CD4-positive, alpha-beta memory T cell (primary cell): ENCODE measurements at regions of chr9 and their contacts with region 1.

Region 1: DNA sequence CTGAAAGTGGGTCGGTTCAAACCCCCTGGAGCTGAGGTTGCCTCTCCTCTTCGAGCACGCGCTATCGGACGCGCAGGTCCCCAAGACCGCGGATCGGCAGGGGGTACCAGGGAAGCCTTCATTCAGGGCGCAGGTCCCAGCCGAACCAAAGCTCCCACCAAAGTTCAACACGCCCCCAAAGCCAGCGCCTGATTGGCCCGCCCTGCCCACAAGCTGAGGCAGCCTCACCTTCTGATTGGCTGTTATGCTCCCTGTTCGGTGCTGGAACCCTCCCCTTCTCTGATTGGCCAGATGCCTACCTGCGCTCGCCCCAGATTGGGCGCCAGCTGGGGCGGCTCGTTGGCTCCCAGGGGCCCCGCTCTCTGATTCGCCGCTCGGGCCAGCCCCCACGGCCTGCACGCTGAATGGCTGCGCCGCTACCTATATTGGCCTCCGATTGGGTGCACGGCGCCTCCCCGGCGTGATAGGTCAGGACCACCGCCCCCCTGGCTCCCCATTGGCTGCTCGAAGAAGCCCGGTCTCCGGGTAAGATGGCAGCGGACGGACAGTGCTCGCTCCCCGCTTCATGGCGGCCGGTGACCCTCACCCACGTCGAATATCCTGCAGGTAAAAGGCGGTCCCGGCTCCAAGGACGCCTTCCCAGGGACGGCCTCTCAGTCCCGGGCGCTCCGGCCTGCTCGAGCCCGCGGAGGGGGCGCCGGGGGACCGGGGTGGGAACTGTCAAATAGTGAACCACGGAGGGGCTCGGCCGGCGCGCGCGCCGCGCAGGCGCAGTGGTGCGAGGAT is at the start of gene DOLPP1:
- DNase-seq: peak; percentile 99 to 100 (median 99)
- H3K4me3 ChIP-seq: peak within 1 kb of the TSS; percentile 75 to 88
- H3K4me3 Mint-ChIP-seq: peak within 1 kb of the TSS; percentile 89 to 96 (median 92)
- H3K27ac ChIP-seq: peak within 1 kb of the TSS; percentile 69
- H3K27ac Mint-ChIP-seq: peak within 1 kb of the TSS; percentile 82 to 97 (median 90)
- H3K4me1 ChIP-seq: peaks cover 23% of the 10 kb centered on the region
- H3K4me1 Mint-ChIP-seq: peaks cover 6 to 37% (median 24%) of the 10 kb centered on the region in 4 donors
- H3K27me3 ChIP-seq: no peaks in the 10 kb centered on the region
- H3K27me3 Mint-ChIP-seq: no peaks in the 10 kb centered on the region
- total RNA-seq, gene DOLPP1: 11.4 to 13.0 TPM

Region 2: GRCh38 chr9:128911529-128912035 is 169.2 kb before region 1 on chr9:
- CTCF ChIA-PET with region 1: no interaction called
- POLR2A ChIA-PET with region 1: no interaction called
- intact Hi-C with region 1: no loop called
- DNase-seq: no peak
- H3K4me3 ChIP-seq: no peak overlapping the region
- H3K4me3 Mint-ChIP-seq: no peak overlapping the region
- H3K27ac ChIP-seq: no peak overlapping the region
- H3K27ac Mint-ChIP-seq: peak overlapping the region in 5 of 7 donors; percentile 15 to 81 (median 64)
- H3K4me1 ChIP-seq: peaks cover 57% of the 10 kb centered on the region
- H3K4me1 Mint-ChIP-seq: peaks cover 19 to 71% (median 39%) of the 10 kb centered on the region in 4 donors
- H3K27me3 ChIP-seq: no peaks in the 10 kb centered on the region
- H3K27me3 Mint-ChIP-seq: no peaks in the 10 kb centered on the region

Region 3: GRCh38 chr9:128927731-128928411 is 152.9 kb before region 1 on chr9:
- CTCF ChIA-PET with region 1: no interaction called
- POLR2A ChIA-PET with region 1: no interaction called
- intact Hi-C with region 1: no loop called
- DNase-seq: peak in 4 of 5 donors; percentile 44 to 61 (median 49)
- H3K4me3 ChIP-seq: no peak overlapping the region
- H3K4me3 Mint-ChIP-seq: no peak overlapping the region
- H3K27ac ChIP-seq: no peak overlapping the region
- H3K27ac Mint-ChIP-seq: peak overlapping the region in 4 of 7 donors; percentile 5 to 60 (median 20)
- H3K4me1 ChIP-seq: peaks cover 8% of the 10 kb centered on the region
- H3K4me1 Mint-ChIP-seq: peaks cover 4 to 13% (median 11%) of the 10 kb centered on the region in 4 donors
- H3K27me3 ChIP-seq: no peaks in the 10 kb centered on the region
- H3K27me3 Mint-ChIP-seq: no peaks in the 10 kb centered on the region

Region 4: DNA sequence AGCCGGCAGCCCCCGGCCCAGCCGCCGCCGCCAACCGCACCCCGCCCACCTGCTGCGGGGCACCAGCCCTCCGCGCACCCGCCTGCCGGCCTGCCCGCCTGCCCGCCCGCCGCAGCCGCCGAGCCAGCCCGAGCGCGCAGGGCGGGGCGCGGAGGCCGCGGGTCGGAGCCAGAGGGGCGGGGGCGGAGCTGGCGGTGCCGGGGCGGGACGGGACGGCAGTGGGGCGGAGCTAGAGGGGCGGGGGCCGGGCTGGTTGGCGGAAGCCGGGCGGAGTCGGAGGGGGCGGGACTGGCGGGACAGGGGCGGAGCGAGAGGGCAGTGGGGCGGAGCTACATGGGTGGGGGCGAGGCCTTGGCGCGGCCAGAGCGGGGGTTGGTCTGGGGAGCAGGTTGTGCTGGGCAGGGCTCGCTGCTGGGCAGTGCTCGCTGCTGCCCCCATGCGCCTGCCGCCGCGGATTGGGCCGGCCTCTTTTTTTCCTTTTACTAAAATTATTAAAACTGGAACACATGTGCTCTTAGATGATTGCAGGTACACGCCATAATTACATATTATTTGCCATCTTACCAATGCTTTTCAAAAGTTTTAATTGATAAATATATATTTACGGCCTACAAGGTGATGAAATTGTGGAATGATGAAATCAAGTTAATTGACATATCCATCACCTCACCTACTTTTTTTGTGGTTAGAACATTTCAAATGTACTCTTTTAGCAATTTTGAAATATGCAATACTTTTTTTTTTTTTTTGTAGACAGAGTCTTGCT is 52.4 kb before region 1 on chr9 and contains the start of gene SH3GLB2:
- CTCF ChIA-PET with region 1: no interaction called
- POLR2A ChIA-PET with region 1: interaction called, 15 read pairs
- intact Hi-C with region 1: loop called (anchors 2 kb)
- DNase-seq: peak; percentile 84 to 93 (median 86)
- H3K4me3 ChIP-seq: peak within 1 kb of the TSS; percentile 37 to 52
- H3K4me3 Mint-ChIP-seq: peak within 1 kb of the TSS; percentile 79 to 92 (median 84)
- H3K27ac ChIP-seq: peak within 1 kb of the TSS; percentile 34
- H3K27ac Mint-ChIP-seq: peak within 1 kb of the TSS; percentile 78 to 90 (median 85)
- H3K4me1 ChIP-seq: peaks cover 20% of the 10 kb centered on the region
- H3K4me1 Mint-ChIP-seq: peaks cover 15 to 29% (median 20%) of the 10 kb centered on the region in 4 donors
- H3K27me3 ChIP-seq: no peaks in the 10 kb centered on the region
- H3K27me3 Mint-ChIP-seq: no peaks in the 10 kb centered on the region
- total RNA-seq, gene SH3GLB2: 111 to 113 TPM

Region 5: GRCh38 chr9:129036241-129036922 is 44.4 kb before region 1 on chr9 and contains the start of gene MIGA2:
- CTCF ChIA-PET with region 1: no interaction called
- POLR2A ChIA-PET with region 1: interaction called, 11 read pairs
- intact Hi-C with region 1: loop called (anchors 1 kb)
- DNase-seq: peak; percentile 92 to 95 (median 94)
- H3K4me3 ChIP-seq: peak within 1 kb of the TSS; percentile 71 to 93
- H3K4me3 Mint-ChIP-seq: peak within 1 kb of the TSS; percentile 90 to 99 (median 96)
- H3K27ac ChIP-seq: peak within 1 kb of the TSS; percentile 70
- H3K27ac Mint-ChIP-seq: peak within 1 kb of the TSS; percentile 84 to 96 (median 91)
- H3K4me1 ChIP-seq: peaks cover 24% of the 10 kb centered on the region
- H3K4me1 Mint-ChIP-seq: peaks cover 19 to 46% (median 30%) of the 10 kb centered on the region in 4 donors
- H3K27me3 ChIP-seq: no peaks in the 10 kb centered on the region
- H3K27me3 Mint-ChIP-seq: no peaks in the 10 kb centered on the region
- total RNA-seq, gene MIGA2: 80.5 to 84.2 TPM

Region 6: GRCh38 chr9:129068990-129069861 is 11.6 kb before region 1 on chr9:
- CTCF ChIA-PET with region 1: interaction called, 3 read pairs
- POLR2A ChIA-PET with region 1: interaction called, 19 read pairs
- intact Hi-C with region 1: no loop called
- DNase-seq: peak; percentile 51 to 67 (median 58)
- H3K4me3 ChIP-seq: no peak overlapping the region
- H3K4me3 Mint-ChIP-seq: peak overlapping the region in 7 of 8 donors; percentile 15 to 71 (median 54)
- H3K27ac ChIP-seq: peak overlapping the region; percentile 49
- H3K27ac Mint-ChIP-seq: peak overlapping the region; percentile 72 to 92 (median 83)
- H3K4me1 ChIP-seq: peaks cover 56% of the 10 kb centered on the region
- H3K4me1 Mint-ChIP-seq: peaks cover 14 to 51% (median 26%) of the 10 kb centered on the region in 4 donors
- H3K27me3 ChIP-seq: no peaks in the 10 kb centered on the region
- H3K27me3 Mint-ChIP-seq: no peaks in the 10 kb centered on the region

Region 7: GRCh38 chr9:129094205-129094954 is 13.6 kb after region 1 on chr9:
- CTCF ChIA-PET with region 1: interaction called, 3 read pairs
- POLR2A ChIA-PET with region 1: interaction called, 10 read pairs
- intact Hi-C with region 1: no loop called
- DNase-seq: peak in 1 of 5 donors; percentile 30
- H3K4me3 ChIP-seq: no peak overlapping the region
- H3K4me3 Mint-ChIP-seq: no peak overlapping the region
- H3K27ac ChIP-seq: no peak overlapping the region
- H3K27ac Mint-ChIP-seq: no peak overlapping the region
- H3K4me1 ChIP-seq: no peaks in the 10 kb centered on the region
- H3K4me1 Mint-ChIP-seq: no peaks in the 10 kb centered on the region
- H3K27me3 ChIP-seq: no peaks in the 10 kb centered on the region
- H3K27me3 Mint-ChIP-seq: no peaks in the 10 kb centered on the region

Region 8: DNA sequence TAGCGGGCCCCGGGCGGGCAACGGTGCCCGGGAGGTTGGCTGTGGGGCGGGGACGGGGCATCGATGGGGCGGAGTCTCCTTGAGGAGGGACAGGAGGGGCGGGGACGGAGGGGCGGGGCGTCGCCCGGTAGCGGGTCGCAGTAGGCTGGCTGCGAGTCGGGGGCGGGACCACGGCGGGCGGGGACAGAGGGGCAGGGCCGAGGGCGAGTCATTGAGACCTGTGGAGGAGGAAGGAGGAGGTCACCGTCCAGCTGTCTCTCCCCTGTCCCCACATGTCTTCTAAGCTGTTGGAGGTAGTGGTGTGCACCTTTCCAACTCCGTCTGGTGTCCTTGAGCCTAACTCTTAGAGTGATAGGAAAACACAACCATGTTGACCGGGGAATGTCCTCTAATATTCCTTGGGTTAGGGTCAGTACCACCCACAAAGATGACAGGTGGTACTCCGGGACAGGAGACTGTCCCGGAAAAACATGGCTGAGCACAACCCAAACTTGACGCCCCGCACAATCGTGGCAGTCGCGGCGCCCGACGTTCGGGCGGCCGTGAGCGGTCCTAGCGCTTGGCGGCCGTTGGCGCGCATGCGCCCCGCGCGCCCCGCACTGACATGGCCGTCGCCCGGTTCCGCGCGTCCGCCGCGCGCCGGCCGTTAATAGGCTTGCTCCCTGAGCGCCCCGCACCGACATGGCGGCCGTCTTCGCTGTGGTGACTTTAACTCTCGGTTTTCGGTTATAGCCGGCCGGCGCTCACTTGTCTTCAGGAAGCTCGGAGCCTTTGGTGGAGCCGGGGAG is 30.1 kb after region 1 on chr9 and contains the starts of genes CRAT and PTPA:
- CTCF ChIA-PET with region 1: no interaction called
- POLR2A ChIA-PET with region 1: interaction called, 22 read pairs
- intact Hi-C with region 1: loop called (anchors 1 kb)
- DNase-seq: peak; percentile 90 to 96 (median 91)
- H3K4me3 ChIP-seq: peak within 1 kb of the TSS; percentile 90 to 93
- H3K4me3 Mint-ChIP-seq: peak within 1 kb of the TSS; percentile 92 to 99 (median 94)
- H3K27ac ChIP-seq: peak within 1 kb of the TSS; percentile 84
- H3K27ac Mint-ChIP-seq: peak within 1 kb of the TSS; percentile 83 to 97 (median 96)
- H3K4me1 ChIP-seq: peaks cover 40% of the 10 kb centered on the region
- H3K4me1 Mint-ChIP-seq: peaks cover 17 to 46% (median 29%) of the 10 kb centered on the region in 4 donors
- H3K27me3 ChIP-seq: no peaks in the 10 kb centered on the region
- H3K27me3 Mint-ChIP-seq: no peaks in the 10 kb centered on the region
- total RNA-seq, gene CRAT: 11.2 to 12.4 TPM
- total RNA-seq, gene PTPA: 49.0 to 51.3 TPM